Motor neuron (in vitro differentiated cells): ENCODE measurements at regions of chr17 and their contacts with region 1.

Region 1: GRCh38 chr17:73359987-73360410 is 48.2 kb upstream of the CDC42EP4 start:
- ATAC-seq: no peak
- H3K4me3 ChIP-seq: no peak overlapping the region
- H3K27ac ChIP-seq: no peak overlapping the region
- H3K4me1 ChIP-seq: peaks cover 32 to 35% of the 10 kb centered on the region in 2 donors

Region 2: GRCh38 chr17:72556944-72557826 is 802.8 kb before region 1 on chr17:
- in situ Hi-C with region 1: loop called in 1 of 9 experiments (anchors 25 kb)
- ATAC-seq: peak; percentile 51 to 90 (median 64)
- H3K4me3 ChIP-seq: no peak overlapping the region
- H3K27ac ChIP-seq: no peak overlapping the region
- H3K4me1 ChIP-seq: peaks cover 7 to 11% of the 10 kb centered on the region in 2 donors

Region 3: DNA sequence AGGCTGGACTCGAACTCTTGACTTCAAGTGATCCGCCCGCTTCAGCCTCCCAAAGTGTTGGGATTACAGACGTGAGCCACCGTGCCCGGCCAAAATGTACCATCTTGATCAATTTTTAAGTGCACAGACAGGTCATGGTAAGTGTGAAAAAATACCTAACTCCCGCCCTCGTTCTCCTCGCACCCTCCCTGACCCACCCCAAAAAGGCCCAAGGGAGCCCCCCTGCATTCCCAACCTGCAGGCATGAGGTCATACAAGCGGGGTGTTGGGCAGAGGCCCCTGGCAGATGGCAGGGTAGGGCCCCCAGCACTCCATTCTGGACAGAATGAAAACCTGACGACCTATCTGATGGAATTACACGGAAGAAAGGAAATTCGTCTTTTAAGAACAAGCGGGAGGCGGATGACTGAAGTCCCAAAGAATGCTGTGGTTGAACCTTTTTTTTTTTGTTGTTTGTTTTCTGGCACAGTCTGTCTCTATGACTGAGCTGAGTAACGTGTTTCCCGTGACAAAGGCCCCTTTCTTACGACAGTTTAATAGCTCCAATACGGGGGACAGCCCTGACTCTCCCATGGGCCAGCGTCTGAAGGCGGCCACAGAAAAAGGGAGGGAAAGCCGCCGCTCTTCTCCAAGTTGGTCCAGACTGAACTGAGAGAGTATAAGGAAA is 644.0 kb before region 1 on chr17:
- in situ Hi-C with region 1: loop called in 2 of 9 experiments (anchors 25 kb)
- ATAC-seq: peak in 7 of 8 experiments; percentile 83 to 96 (median 94)
- H3K4me3 ChIP-seq: no peak overlapping the region
- H3K27ac ChIP-seq: peak overlapping the region in 1 of 2 donors; percentile 61
- H3K4me1 ChIP-seq: peaks cover 7 to 18% of the 10 kb centered on the region in 2 donors

Region 4: GRCh38 chr17:73255671-73256181 is 104.3 kb before region 1 on chr17:
- in situ Hi-C with region 1: loop called in 8 of 9 experiments (anchors 5 to 25 kb)
- ATAC-seq: peak; percentile 84 to 100 (median 98)
- H3K4me3 ChIP-seq: no peak overlapping the region
- H3K27ac ChIP-seq: no peak overlapping the region
- H3K4me1 ChIP-seq: peaks cover 9 to 13% of the 10 kb centered on the region in 2 donors